ENCODE measurements at regions of chr9 and their contacts with region 1.

Region 1: DNA sequence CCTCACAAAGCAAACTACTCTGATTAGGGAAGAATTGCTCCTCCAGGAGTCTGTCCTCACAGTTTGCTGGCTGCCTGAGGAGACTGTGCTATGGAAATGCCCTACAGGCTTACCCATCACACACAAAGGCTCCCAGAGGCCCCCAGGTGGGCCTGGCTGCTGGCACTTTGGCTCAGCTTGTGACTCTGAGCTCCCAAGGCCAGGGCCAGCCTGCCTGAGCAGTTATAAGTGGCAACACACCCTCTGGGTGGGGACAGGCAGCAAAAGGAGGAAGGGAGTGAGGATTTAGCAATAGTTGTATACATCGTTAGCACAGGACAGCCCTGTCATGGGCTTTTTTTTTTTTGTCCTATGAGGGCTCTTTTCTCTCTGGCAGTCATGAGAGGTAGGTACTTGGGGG is 103.5 kb downstream of the DAPK1 start:
- DNase-seq: no peak
- ATAC-seq: no peak
- H3K4me3 ChIP-seq: no peak overlapping the region
- H3K27ac ChIP-seq: no peak overlapping the region
- H3K4me1 ChIP-seq: no peaks in the 10 kb centered on the region
- H3K27me3 ChIP-seq: peaks cover 2% of the 10 kb centered on the region
- CTCF ChIP-seq: no peak

Region 2: GRCh38 chr9:87467199-87467598 is 134.0 kb before region 1 on chr9:
- CTCF ChIA-PET with region 1: no interaction called
- POLR2A ChIA-PET with region 1: interaction called, 16 read pairs
- in situ Hi-C with region 1: no loop called
- intact Hi-C with region 1: no loop called
- DNase-seq: no peak
- ATAC-seq: no peak
- H3K4me3 ChIP-seq: no peak overlapping the region
- H3K27ac ChIP-seq: no peak overlapping the region
- H3K4me1 ChIP-seq: no peaks in the 10 kb centered on the region
- H3K27me3 ChIP-seq: no peaks in the 10 kb centered on the region
- CTCF ChIP-seq: no peak

Measured in Panc1 (cell line).